Activated CD4-positive, alpha-beta memory T cell treated with anti-CD3 and anti-CD28 coated beads, Interleukin-2, amount 10 ng/mL, durations not matched to agents 7 days and 5 days (primary cell): ENCODE measurements at regions of chr3 and their contacts with region 1.

Region 1: GRCh38 chr3:152298393-152299242 is 29.9 kb downstream of the MBNL1 start:
- DNase-seq: peak; percentile 44
- H3K4me3 Mint-ChIP-seq: peak overlapping the region; percentile 56
- H3K27ac Mint-ChIP-seq: peak overlapping the region; percentile 67
- H3K4me1 Mint-ChIP-seq: peaks cover 69% of the 10 kb centered on the region
- H3K27me3 Mint-ChIP-seq: no peaks in the 10 kb centered on the region

Region 2: GRCh38 chr3:152281133-152281713 is 17.4 kb before region 1 on chr3:
- CTCF ChIA-PET with region 1: interaction called, 5 read pairs
- POLR2A ChIA-PET with region 1: interaction called, 36 read pairs
- DNase-seq: no peak
- H3K4me3 Mint-ChIP-seq: peak overlapping the region; percentile 15
- H3K27ac Mint-ChIP-seq: peak overlapping the region; percentile 68
- H3K4me1 Mint-ChIP-seq: peaks cover 79% of the 10 kb centered on the region
- H3K27me3 Mint-ChIP-seq: no peaks in the 10 kb centered on the region

Region 3: GRCh38 chr3:152309535-152310307 is 11.1 kb after region 1 on chr3:
- CTCF ChIA-PET with region 1: interaction called, 3 read pairs
- POLR2A ChIA-PET with region 1: interaction called, 18 read pairs
- DNase-seq: no peak
- H3K4me3 Mint-ChIP-seq: no peak overlapping the region
- H3K27ac Mint-ChIP-seq: peak overlapping the region; percentile 36
- H3K4me1 Mint-ChIP-seq: peaks cover 64% of the 10 kb centered on the region
- H3K27me3 Mint-ChIP-seq: no peaks in the 10 kb centered on the region

Region 4: DNA sequence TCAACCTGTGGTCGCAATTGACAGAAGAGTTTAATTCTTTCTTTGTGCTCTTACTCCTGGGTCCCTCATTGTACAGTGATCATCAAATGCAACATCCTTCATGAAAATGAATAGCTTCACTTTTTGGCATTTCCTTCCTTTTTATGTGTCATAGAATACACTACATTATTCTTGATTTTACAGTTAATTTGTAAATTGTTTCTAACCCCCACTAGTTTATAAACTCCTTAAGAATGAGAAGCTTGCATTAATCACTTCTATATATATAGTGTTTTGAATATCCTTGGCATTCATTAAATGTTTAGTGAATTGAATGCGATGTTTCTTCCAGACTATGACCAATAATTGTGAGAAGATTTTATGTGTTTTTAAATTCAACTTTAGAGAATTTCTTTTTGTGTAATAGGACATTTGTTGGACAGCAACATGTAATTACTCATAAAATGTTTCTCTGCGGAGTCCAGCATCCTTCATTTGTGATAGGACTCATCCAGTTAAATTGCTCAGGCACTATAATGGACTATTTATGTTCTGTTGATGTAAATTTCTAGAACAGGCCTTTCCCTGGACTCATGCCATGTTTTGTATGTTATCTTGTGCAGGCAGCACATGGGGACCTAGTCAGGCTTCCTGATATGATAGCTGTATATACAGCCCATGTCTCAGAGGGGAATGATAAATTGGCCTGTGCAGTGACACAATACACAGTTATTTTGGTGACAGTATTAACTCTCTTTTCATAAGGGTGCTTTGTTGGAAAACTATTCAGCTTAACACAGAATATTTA is 21.4 kb after region 1 on chr3:
- CTCF ChIA-PET with region 1: no interaction called
- POLR2A ChIA-PET with region 1: interaction called, 14 read pairs
- DNase-seq: no peak
- H3K4me3 Mint-ChIP-seq: no peak overlapping the region
- H3K27ac Mint-ChIP-seq: no peak overlapping the region
- H3K4me1 Mint-ChIP-seq: peaks cover 79% of the 10 kb centered on the region
- H3K27me3 Mint-ChIP-seq: no peaks in the 10 kb centered on the region

Region 5: GRCh38 chr3:152405915-152406802 is 107.5 kb after region 1 on chr3:
- CTCF ChIA-PET with region 1: no interaction called
- POLR2A ChIA-PET with region 1: no interaction called
- DNase-seq: no peak
- H3K4me3 Mint-ChIP-seq: no peak overlapping the region
- H3K27ac Mint-ChIP-seq: no peak overlapping the region
- H3K4me1 Mint-ChIP-seq: peaks cover 54% of the 10 kb centered on the region
- H3K27me3 Mint-ChIP-seq: no peaks in the 10 kb centered on the region